ENCODE measurements at regions of chr6 and their contacts with region 1.

Region 1: GRCh38 chr6:70107852-70108629 is 194.8 kb downstream of the COL9A1 start:
- DNase-seq: no peak
- H3K4me3 ChIP-seq: no peak overlapping the region
- H3K27ac ChIP-seq: no peak overlapping the region
- H3K27me3 ChIP-seq: no peaks in the 10 kb centered on the region
- CTCF ChIP-seq: peak; percentile 74

Region 2: GRCh38 chr6:68638230-68638900 is 1469.7 kb before region 1 on chr6:
- CTCF ChIA-PET with region 1: interaction called, 21 read pairs
- POLR2A ChIA-PET with region 1: no interaction called
- DNase-seq: peak; percentile 6
- H3K4me3 ChIP-seq: no peak overlapping the region
- H3K27ac ChIP-seq: no peak overlapping the region
- H3K27me3 ChIP-seq: peaks cover 22% of the 10 kb centered on the region
- CTCF ChIP-seq: peak; percentile 74

Region 3: GRCh38 chr6:69732640-69733039 is 375.4 kb before region 1 on chr6:
- CTCF ChIA-PET with region 1: interaction called, 49 read pairs
- POLR2A ChIA-PET with region 1: no interaction called
- DNase-seq: no peak
- H3K4me3 ChIP-seq: no peak overlapping the region
- H3K27ac ChIP-seq: no peak overlapping the region
- H3K27me3 ChIP-seq: no peaks in the 10 kb centered on the region
- CTCF ChIP-seq: peak; percentile 22

Region 4: GRCh38 chr6:69835414-69836179 is 272.4 kb before region 1 on chr6:
- CTCF ChIA-PET with region 1: interaction called, 12 read pairs
- POLR2A ChIA-PET with region 1: no interaction called
- DNase-seq: peak; percentile 46
- H3K4me3 ChIP-seq: peak overlapping the region; percentile 8; the same call in 1 of the 2 replicates
- H3K27ac ChIP-seq: no peak overlapping the region
- H3K27me3 ChIP-seq: no peaks in the 10 kb centered on the region
- CTCF ChIP-seq: peak; percentile 94

Region 5: DNA sequence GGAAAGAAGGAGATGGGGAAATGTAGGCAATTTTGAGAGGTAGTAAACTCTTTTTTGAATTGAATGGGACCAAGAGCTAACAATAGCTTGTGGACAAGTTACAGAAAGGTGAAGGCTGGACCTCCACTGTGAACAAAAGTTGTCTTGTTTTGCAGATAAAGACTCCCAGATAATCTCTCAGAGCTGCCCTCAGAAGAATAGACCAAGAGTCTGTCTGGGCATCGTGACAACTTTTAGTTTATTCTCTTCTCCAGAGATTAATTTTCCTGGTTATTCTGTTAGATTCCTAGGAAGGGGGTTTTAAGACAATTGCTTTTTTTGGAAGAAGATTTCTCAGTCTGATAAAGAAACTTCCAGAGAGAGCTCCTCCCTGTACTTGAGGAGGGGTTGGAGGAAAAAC is 79.8 kb before region 1 on chr6:
- CTCF ChIA-PET with region 1: no interaction called
- POLR2A ChIA-PET with region 1: no interaction called
- DNase-seq: no peak
- H3K4me3 ChIP-seq: no peak overlapping the region
- H3K27ac ChIP-seq: no peak overlapping the region
- H3K27me3 ChIP-seq: no peaks in the 10 kb centered on the region
- CTCF ChIP-seq: no peak

Region 6: DNA sequence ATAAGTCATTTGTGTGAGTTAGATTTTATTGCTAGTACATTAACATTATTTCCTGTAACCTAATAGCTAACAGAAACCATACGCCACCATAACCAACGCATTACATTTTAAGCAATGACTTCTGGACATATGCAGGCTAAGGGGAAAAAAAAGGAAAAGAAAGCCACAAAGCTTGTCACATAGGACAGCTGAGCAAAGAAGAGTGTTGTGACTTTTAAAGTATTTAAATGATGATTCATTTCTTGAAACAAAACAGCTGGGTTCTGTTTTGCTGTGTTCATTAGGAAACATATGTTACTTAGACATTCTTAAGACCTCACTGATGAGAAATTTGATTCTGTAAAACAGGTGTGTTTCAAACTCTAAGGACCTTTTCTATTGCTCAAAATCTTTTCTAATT is 23.5 kb after region 1 on chr6:
- CTCF ChIA-PET with region 1: no interaction called
- POLR2A ChIA-PET with region 1: no interaction called
- DNase-seq: no peak
- H3K4me3 ChIP-seq: no peak overlapping the region
- H3K27ac ChIP-seq: no peak overlapping the region
- H3K27me3 ChIP-seq: no peaks in the 10 kb centered on the region
- CTCF ChIP-seq: no peak

Measured in AG04450 (cell line).